CD8-positive, alpha-beta memory T cell (primary cell): ENCODE measurements at regions of chr4 and their contacts with region 1.

Region 1: DNA sequence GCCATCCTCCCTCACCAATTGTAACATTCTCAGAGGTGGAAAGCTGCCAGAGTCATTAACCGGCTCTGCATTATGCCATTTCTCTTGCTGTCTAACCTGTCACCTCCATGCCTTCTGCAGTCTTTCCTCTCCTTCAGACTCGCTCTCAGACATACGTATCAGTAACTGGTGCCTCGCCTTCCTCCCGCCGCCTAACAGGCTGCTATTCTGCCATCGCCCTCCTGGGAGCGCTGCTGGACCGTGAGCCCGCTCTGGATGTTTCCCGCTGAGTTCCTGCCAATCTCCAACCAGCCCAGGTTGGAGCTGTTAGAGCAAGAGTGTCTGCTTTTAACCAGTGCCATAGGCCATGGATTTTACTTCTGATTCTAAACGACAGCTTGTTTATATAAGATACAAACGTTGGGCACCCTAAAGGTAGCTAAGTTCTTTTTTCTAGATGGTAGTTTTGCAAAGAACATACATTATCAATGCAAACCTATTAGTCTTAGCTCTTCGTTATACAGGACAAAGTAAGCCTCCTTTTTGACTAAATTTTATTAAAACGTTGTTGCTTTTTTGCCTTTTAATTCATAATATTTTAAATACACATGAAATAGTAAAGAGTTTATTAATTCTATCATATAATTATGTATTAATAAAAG is 59.5 kb upstream of the NEIL3 start:
- DNase-seq: peak; percentile 46 to 74 (median 54)
- H3K4me3 ChIP-seq: no peak overlapping the region
- H3K4me3 Mint-ChIP-seq: peak overlapping the region in 1 of 7 donors; percentile 37
- H3K27ac ChIP-seq: no peak overlapping the region
- H3K27ac Mint-ChIP-seq: no peak overlapping the region
- H3K4me1 ChIP-seq: peaks cover 6% of the 10 kb centered on the region
- H3K4me1 Mint-ChIP-seq: peaks cover 8 to 15% (median 12%) of the 10 kb centered on the region in 3 donors
- H3K27me3 ChIP-seq: no peaks in the 10 kb centered on the region
- H3K27me3 Mint-ChIP-seq: peaks cover 6 to 20% of the 10 kb centered on the region in 2 donors

Region 2: DNA sequence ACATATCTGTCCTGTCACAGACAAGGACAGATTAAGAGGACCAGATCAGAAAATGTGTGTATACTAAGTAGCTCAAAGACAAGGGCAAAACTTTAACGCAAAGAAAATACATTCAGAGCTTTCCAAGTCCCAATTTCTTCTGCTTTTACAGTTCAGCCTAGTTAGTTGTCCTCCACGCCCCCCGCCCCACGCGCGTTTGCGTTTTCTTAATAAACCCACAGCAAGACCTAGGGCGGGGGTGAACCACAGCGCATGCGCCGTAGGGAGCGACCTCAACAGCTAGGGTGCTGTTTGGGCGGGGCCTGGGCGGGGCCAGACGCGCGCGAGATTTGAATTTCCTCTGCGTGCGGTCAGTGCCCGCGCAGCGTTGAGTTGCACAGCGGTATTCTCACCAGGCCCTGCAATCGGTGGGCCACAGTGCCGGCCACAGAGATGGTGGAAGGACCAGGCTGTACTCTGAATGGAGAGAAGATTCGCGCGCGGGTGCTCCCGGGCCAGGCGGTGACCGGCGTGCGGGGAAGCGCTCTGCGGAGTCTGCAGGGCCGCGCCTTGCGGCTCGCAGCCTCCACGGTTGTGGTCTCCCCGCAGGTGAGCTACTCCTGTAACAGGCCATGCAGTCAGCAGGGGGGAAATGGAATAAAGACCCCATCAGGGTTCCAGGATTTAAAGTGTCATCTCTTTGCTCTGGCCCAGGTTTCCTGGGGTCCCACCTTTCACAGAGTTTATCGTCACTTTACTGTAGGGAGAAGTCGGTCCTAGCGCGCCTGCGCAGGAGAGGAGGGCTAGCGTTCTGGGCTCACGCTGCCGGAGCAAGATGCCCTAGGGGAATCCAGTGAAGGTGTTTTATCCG is 59.6 kb after region 1 on chr4 and contains the start of gene NEIL3:
- CTCF ChIA-PET with region 1: interaction called, 12 read pairs
- POLR2A ChIA-PET with region 1: no interaction called
- DNase-seq: peak; percentile 87 to 97 (median 94)
- H3K4me3 ChIP-seq: peak within 1 kb of the TSS; percentile 67
- H3K4me3 Mint-ChIP-seq: peak within 1 kb of the TSS; percentile 80 to 96 (median 94)
- H3K27ac ChIP-seq: peak within 1 kb of the TSS; percentile 72
- H3K27ac Mint-ChIP-seq: peak within 1 kb of the TSS; percentile 60 to 92 (median 90)
- H3K4me1 ChIP-seq: peaks cover 22% of the 10 kb centered on the region
- H3K4me1 Mint-ChIP-seq: peaks cover 15 to 63% (median 48%) of the 10 kb centered on the region in 3 donors
- H3K27me3 ChIP-seq: no peaks in the 10 kb centered on the region
- H3K27me3 Mint-ChIP-seq: no peaks in the 10 kb centered on the region
- total RNA-seq, gene NEIL3: 9.9 to 10.3 TPM

Region 3: DNA sequence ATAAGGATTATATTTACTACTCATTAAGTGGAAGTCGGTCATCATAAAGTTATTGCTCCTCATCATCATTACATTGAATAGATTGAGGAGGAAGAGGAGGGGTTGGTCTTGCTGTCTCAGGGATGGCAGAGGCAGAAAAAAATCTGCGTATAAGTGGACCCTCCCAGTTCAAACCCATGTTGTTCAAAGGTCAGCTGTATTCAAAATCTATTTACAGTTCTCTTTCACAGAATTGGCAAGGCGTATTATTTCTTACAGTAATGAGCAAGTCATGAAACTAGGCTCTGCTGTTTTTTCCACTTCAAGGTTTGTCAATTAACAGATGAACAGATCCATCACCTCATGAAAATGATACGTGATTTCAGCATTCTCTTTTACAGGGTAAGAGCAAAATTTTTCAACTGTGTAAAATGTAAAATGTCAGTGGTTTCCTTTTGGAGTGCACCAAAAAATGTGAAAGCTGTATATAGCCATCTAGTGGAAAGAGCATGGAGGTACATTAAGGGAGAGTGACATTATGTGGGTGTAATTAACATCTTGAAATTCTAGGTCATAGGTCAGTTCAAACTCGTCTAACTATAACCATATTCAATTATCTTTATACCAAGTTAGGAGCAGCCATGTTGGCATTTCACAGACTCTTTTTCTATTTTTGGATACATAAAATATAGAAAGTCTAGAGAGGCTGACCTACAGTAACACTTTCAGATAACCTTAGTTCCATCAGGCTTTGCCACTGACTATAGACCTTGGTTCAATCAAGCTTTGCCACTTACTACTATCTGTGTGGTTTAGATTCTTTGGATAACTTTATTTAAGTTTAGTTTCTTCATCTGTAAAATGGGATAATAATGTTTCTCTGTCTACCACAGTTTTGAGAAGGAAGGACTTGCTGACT is 89.5 kb after region 1 on chr4:
- CTCF ChIA-PET with region 1: interaction called, 51 read pairs
- POLR2A ChIA-PET with region 1: no interaction called
- DNase-seq: peak in 2 of 5 donors; percentile 13 to 27
- H3K4me3 ChIP-seq: no peak overlapping the region
- H3K4me3 Mint-ChIP-seq: peak overlapping the region in 4 of 7 donors; percentile 3 to 60 (median 34)
- H3K27ac ChIP-seq: no peak overlapping the region
- H3K27ac Mint-ChIP-seq: peak overlapping the region in 1 of 8 donors; percentile 52
- H3K4me1 ChIP-seq: no peaks in the 10 kb centered on the region
- H3K4me1 Mint-ChIP-seq: peaks cover 5 to 35% (median 11%) of the 10 kb centered on the region in 3 donors
- H3K27me3 ChIP-seq: no peaks in the 10 kb centered on the region
- H3K27me3 Mint-ChIP-seq: no peaks in the 10 kb centered on the region

Region 4: GRCh38 chr4:177401658-177402273 is 151.6 kb after region 1 on chr4:
- CTCF ChIA-PET with region 1: no interaction called
- POLR2A ChIA-PET with region 1: no interaction called
- DNase-seq: peak in 2 of 5 donors; percentile 9 to 16
- H3K4me3 ChIP-seq: peak overlapping the region; percentile 21
- H3K4me3 Mint-ChIP-seq: peak overlapping the region in 6 of 7 donors; percentile 29 to 73 (median 55)
- H3K27ac ChIP-seq: no peak overlapping the region
- H3K27ac Mint-ChIP-seq: peak overlapping the region in 7 of 8 donors; percentile 24 to 94 (median 79)
- H3K4me1 ChIP-seq: peaks cover 30% of the 10 kb centered on the region
- H3K4me1 Mint-ChIP-seq: peaks cover 42 to 43% (median 42%) of the 10 kb centered on the region in 3 donors
- H3K27me3 ChIP-seq: no peaks in the 10 kb centered on the region
- H3K27me3 Mint-ChIP-seq: peaks cover 0 to 5% of the 10 kb centered on the region in 2 donors